Head of caudate nucleus (tissue), 42 donors: ENCODE measurements at regions of chr3 and their contacts with region 1.

Region 1: DNA sequence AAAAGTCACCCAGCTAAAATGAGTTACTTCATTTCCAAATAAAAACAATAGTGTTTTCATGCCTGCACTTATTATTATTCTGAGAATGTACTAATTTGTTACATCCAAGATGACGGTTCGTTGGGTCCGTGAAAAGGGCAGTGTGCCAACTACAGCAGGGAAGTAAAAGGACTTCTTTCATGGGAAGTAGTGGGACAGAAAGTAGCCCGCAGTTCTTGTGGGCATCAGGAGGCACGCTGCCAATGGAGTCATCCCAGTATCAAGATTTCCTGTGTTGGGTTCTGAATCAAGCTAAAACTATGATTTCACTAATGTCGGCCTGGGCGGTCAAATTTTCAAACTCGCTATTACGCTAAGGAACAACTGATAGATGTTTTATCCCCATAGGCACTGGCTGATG is 254.5 kb upstream of the SOX2 start:
- DNase-seq: peak; percentile 78 to 99 (median 93)

Region 2: GRCh38 chr3:181326637-181327223 is 130.5 kb before region 1 on chr3:
- intact Hi-C with region 1: loop called (anchors 5 kb)
- DNase-seq: peak in 16 of 42 donors; percentile 4 to 77 (median 32)